HEK293T (cell line): ENCODE measurements at regions of chr15 and their contacts with region 1.

Region 1: GRCh38 chr15:76983590-76984375 is 11.1 kb upstream of the PSTPIP1 start:
- DNase-seq: no peak

Region 2: DNA sequence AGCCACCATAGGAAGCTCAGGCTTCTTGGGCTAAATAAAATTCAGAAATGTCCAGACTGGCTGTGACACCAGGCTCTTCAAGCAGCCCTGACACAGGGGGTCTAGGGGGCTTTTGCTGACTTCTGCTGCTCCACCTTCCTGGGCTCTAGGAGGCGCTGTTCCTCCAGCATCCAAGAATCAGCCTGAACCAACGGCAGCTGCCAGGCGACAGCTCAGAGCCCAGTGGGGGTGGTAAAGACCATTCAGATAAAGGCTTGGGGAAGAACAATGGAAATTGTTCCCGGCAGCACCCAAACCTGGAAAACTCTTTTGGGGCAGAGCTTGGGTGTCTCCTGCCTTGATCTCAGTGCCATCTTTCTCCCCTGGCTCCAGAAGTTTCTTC is 10.4 kb before region 1 on chr15:
- CTCF ChIA-PET with region 1: interaction called, 14 read pairs
- POLR2A ChIA-PET with region 1: no interaction called
- DNase-seq: peak; percentile 80